Activated CD4-positive, alpha-beta T cell treated with anti-CD3 and anti-CD28 coated beads, Interleukin-2, amount 10 ng/mL, durations not matched to agents 24 days and 14 days (primary cell): ENCODE measurements at regions of chr5 and their contacts with region 1.

Region 1: DNA sequence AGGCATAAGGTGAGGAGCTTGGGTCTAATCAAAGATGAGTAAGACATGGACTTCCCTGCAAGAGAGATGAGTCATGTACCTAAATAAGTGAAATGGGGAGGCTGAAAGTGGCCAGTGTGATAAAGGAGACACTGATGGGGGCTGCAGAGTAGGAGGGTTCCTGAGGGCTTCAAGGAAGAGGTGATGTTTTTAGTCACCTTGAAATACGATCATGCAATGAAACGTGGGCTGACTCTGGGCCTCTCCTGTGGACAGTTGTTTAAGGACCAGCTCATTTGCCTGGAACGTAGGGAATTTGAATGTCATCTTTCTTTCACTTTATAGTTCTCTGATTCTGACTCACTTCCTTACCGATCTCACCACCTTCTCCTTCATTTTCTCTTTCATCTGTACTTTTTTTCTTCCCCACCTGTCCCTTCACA is 49.6 kb upstream of the CPLX2 start:
- DNase-seq: no peak
- H3K4me3 Mint-ChIP-seq: peak overlapping the region; percentile 54
- H3K27ac Mint-ChIP-seq: peak overlapping the region; percentile 74
- H3K4me1 Mint-ChIP-seq: peaks cover 13% of the 10 kb centered on the region
- H3K27me3 Mint-ChIP-seq: no peaks in the 10 kb centered on the region

Region 2: GRCh38 chr5:175464074-175464941 is 357.5 kb before region 1 on chr5:
- intact Hi-C with region 1: no loop called
- DNase-seq: peak; percentile 93
- H3K4me3 Mint-ChIP-seq: no peak overlapping the region
- H3K27ac Mint-ChIP-seq: peak overlapping the region; percentile 34
- H3K4me1 Mint-ChIP-seq: peaks cover 10% of the 10 kb centered on the region
- H3K27me3 Mint-ChIP-seq: peaks cover 3% of the 10 kb centered on the region

Region 3: GRCh38 chr5:175743676-175744210 is 78.1 kb before region 1 on chr5:
- intact Hi-C with region 1: no loop called
- DNase-seq: no peak
- H3K4me3 Mint-ChIP-seq: no peak overlapping the region
- H3K27ac Mint-ChIP-seq: no peak overlapping the region
- H3K4me1 Mint-ChIP-seq: no peaks in the 10 kb centered on the region
- H3K27me3 Mint-ChIP-seq: peaks cover 26% of the 10 kb centered on the region

Region 4: DNA sequence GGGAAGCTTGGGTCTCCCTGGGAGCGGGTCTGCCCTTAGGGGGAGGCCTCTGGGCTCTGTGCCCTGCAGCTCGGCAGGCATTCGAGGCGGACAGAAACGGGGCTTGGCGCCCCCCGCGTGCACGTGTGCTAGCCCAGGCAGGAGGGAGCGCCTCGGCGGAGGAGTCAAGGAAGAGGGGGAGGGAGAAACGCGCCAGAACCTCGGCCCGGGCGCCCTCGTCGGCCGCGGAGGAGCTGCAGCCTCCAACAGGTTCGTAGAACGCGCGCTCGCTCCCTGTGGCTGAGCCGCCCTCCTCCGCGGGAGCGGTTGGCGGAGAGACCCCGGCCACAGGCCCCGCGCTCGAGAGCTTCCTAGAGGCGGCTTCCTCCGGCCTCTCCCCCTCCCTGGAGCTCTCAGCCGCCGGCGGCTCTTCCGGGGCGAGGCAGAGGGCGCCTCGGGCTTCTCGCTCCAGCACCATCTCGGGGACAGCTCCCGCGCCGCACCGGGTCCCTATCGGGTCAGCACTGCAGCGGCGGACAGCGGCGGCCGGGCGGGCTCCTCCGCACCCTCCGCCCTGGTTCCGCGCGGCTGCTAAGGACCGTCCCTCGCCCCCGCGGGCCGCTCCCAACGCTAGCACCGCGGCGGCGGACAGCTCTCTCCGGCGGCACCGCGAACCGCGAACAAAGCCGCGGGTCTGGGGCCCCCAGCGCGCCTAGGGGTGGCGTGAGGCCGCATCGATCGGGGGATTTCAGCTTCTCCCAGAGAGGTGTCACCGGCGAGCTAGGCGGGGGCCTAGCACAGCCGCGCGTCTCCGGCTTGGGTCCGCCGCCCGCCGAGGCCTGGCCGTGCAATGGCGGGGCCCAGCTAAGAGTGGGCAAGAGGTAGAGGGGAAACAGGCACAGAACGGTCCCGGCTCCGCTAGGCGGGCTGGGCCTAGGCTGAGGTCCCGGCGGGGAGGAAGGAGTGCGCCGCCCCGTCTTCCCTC is 25.0 kb before region 1 on chr5:
- intact Hi-C with region 1: loop called (anchors 1 kb)
- DNase-seq: peak; percentile 95
- H3K4me3 Mint-ChIP-seq: no peak overlapping the region
- H3K27ac Mint-ChIP-seq: no peak overlapping the region
- H3K4me1 Mint-ChIP-seq: peaks cover 2% of the 10 kb centered on the region
- H3K27me3 Mint-ChIP-seq: peaks cover 39% of the 10 kb centered on the region

Region 5: DNA sequence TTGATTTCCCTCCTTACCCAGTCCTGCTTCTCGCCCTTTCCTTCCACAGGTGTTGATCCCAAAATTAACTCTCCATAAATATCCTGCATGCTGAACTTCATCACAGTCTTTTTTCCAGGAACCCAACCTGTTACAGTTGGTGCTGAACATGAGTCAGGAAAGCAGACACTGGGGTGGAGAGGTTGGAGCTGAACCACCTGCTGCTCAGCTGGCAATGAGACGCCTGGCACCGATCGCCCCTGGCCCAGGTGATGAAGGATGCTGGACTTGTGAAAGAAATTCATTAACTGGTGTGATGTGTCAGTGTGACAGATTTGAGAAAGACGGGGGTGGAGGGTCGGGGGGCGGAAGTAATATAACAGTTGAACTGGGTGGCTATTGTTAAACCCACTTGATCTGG is 80.2 kb after region 1 on chr5:
- intact Hi-C with region 1: no loop called
- DNase-seq: no peak
- H3K4me3 Mint-ChIP-seq: no peak overlapping the region
- H3K27ac Mint-ChIP-seq: no peak overlapping the region
- H3K4me1 Mint-ChIP-seq: no peaks in the 10 kb centered on the region
- H3K27me3 Mint-ChIP-seq: peaks cover 9% of the 10 kb centered on the region